Tibial artery (tissue), 4 donors: ENCODE measurements at regions of chr5 and their contacts with region 1.

Region 1: DNA sequence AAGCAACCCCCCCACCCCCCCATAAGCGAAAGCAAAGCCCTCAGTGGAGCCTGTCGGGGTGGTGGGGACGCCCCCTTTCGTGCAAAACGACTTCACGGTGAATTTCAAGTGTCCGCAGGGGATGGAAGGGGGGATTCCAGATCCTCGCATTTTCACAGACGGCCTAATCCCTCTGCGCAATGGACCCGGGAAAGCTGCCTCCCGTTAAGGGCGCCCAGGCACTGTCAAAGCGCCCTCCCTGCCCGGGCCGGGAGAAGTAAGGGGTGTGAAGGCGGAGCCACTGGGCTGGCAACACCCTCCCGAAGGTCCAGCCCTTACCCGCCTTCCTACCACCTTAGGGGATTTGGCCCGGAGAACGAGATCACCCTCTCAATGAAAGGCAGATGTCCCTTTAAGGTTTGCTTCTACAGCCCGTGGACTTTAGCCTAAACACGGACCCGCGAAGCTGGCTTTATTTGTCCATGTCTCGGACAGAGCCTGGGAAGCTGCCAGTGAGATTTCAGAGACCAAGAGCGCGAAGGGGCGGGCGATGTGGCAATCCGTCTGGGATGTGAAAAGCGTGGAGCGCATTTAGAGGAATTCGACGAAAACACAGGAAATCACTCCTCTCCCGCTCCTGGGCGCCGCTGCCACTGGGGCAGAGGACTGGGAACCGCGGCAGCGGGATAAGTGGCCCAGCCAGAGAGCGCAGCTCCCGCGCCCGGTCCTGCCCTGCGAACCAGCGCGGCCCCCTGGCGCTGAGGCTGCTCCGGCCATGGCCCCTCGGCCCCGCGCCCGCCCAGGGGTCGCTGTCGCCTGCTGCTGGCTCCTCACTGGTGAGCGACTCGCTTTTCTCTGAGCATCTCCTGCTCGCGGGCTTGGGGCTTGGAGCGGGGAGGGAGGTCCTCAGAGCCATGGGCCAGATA is at the starts of genes ITGA1 and PELO:
- DNase-seq: peak; percentile 90 to 92
- H3K4me3 ChIP-seq: peak within 1 kb of the TSS; percentile 66 to 86
- H3K27ac ChIP-seq: peak within 1 kb of the TSS; percentile 95 to 96
- H3K4me1 ChIP-seq: peaks cover 0 to 64% (median 7%) of the 10 kb centered on the region in 4 donors
- H3K27me3 ChIP-seq: no peaks in the 10 kb centered on the region
- CTCF ChIP-seq: peak; percentile 51 to 53

Region 2: DNA sequence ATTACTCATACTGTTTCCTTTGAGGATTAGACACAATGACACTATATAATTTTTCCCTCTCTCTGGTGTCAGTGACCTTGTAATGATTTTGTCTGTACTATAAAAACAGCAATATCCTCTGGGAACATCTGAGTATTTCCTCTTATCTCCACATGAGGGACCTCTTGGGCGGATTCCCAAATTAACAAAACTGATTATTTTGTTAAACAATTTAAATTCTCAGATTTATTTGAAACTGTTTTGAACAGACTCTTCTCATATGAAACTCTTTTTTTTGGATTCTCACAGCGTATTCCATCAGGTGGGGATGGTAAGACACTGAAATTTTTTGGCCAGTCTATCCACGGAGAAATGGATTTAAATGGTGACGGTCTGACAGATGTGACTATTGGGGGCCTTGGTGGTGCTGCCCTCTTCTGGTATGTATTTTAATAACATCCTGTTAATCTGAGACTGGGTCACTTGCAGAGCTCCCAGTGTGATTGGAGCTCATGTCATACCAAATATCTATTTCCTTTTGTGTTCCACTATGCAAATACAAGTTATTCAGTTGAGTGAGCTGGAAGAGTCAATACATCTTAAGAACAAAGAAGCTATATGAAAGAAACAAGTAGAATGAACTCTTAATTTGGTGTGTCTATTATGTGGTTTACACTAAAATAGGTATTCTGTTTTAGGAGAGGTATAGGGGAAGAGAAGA is 127.5 kb after region 1 on chr5:
- intact Hi-C with region 1: loop called (anchors 1 kb)
- DNase-seq: no peak
- H3K4me3 ChIP-seq: peak overlapping the region; percentile 17 to 30
- H3K27ac ChIP-seq: peak overlapping the region; percentile 24 to 29
- H3K4me1 ChIP-seq: peaks cover 0 to 15% (median 4%) of the 10 kb centered on the region in 4 donors
- H3K27me3 ChIP-seq: no peaks in the 10 kb centered on the region
- CTCF ChIP-seq: peak; percentile 69 to 73

Region 3: GRCh38 chr5:53008751-53009150 is 220.9 kb after region 1 on chr5:
- intact Hi-C with region 1: no loop called
- DNase-seq: no peak
- H3K4me3 ChIP-seq: no peak overlapping the region
- H3K27ac ChIP-seq: no peak overlapping the region
- H3K4me1 ChIP-seq: no peaks in the 10 kb centered on the region
- H3K27me3 ChIP-seq: no peaks in the 10 kb centered on the region
- CTCF ChIP-seq: no peak

Region 4: DNA sequence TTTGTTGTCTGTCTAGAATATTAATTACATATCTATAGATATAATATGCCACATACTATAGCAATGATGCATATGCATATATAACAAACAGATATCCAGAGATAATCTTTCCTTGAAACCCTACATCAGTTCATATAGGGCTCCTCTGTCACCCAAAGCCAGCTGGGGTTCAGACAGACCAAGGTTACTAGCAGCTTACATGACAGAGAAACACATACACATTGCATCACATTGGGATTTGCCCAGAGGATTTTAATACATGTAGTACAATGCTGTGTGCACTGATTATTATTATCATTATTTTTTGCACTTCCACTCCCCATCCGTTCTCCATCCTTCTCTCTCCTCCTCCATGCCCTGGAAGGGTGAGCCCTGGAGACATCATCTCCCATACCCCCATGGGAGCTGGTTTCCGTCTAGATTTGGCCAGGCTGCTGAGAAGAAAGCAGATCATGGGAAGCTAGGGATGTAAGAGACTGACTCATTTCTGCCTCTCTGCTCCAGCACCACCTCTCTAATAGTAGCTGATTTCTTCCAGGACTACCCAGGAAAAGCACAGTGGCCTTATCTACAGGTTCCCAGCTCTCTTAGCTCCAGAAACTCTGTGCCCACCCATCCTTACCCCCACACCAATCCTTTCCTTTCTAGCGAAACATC is 715.8 kb after region 1 on chr5:
- intact Hi-C with region 1: no loop called
- DNase-seq: no peak
- H3K4me3 ChIP-seq: no peak overlapping the region
- H3K27ac ChIP-seq: no peak overlapping the region
- H3K4me1 ChIP-seq: no peaks in the 10 kb centered on the region
- H3K27me3 ChIP-seq: no peaks in the 10 kb centered on the region
- CTCF ChIP-seq: no peak